CD4-positive, alpha-beta T cell (primary cell): ENCODE measurements at regions of chr14 and their contacts with region 1.

Region 1: GRCh38 chr14:89954070-89955028 is at the start of gene EFCAB11:
- DNase-seq: peak; percentile 88 to 99 (median 92)
- ATAC-seq: peak; percentile 81
- H3K4me3 ChIP-seq: peak within 1 kb of the TSS; percentile 74
- H3K4me3 Mint-ChIP-seq: peak within 1 kb of the TSS; percentile 88
- H3K27ac ChIP-seq: peak within 1 kb of the TSS in 1 of 2 donors; percentile 40
- H3K27ac Mint-ChIP-seq: peak within 1 kb of the TSS; percentile 99
- H3K4me1 ChIP-seq: peaks cover 38% of the 10 kb centered on the region
- H3K4me1 Mint-ChIP-seq: peaks cover 39% of the 10 kb centered on the region
- H3K27me3 ChIP-seq: no peaks in the 10 kb centered on the region
- H3K27me3 Mint-ChIP-seq: no peaks in the 10 kb centered on the region
- CTCF ChIP-seq: no peak
- total RNA-seq, gene EFCAB11: 0.36 to 0.47 TPM

Region 2: GRCh38 chr14:88824314-88825077 is 1129.9 kb before region 1 on chr14 and contains the start of gene TTC8:
- CTCF ChIA-PET with region 1: no interaction called
- POLR2A ChIA-PET with region 1: no interaction called
- intact Hi-C with region 1: loop called in 1 of 2 experiments (anchors 10 kb)
- DNase-seq: peak; percentile 75 to 92 (median 82)
- ATAC-seq: peak; percentile 96
- H3K4me3 ChIP-seq: peak within 1 kb of the TSS; percentile 83
- H3K4me3 Mint-ChIP-seq: peak within 1 kb of the TSS; percentile 86
- H3K27ac ChIP-seq: peak within 1 kb of the TSS; percentile 56 to 90
- H3K27ac Mint-ChIP-seq: peak within 1 kb of the TSS; percentile 96
- H3K4me1 ChIP-seq: peaks cover 7% of the 10 kb centered on the region
- H3K4me1 Mint-ChIP-seq: peaks cover 7% of the 10 kb centered on the region
- H3K27me3 ChIP-seq: no peaks in the 10 kb centered on the region
- H3K27me3 Mint-ChIP-seq: peaks cover 11% of the 10 kb centered on the region
- CTCF ChIP-seq: no peak
- total RNA-seq, gene TTC8: 1.6 to 2.1 TPM

Region 3: GRCh38 chr14:89625244-89625713 is 329.1 kb before region 1 on chr14:
- CTCF ChIA-PET with region 1: no interaction called
- POLR2A ChIA-PET with region 1: interaction called, 3 read pairs
- intact Hi-C with region 1: loop called (anchors 1 to 10 kb)
- DNase-seq: no peak
- ATAC-seq: no peak
- H3K4me3 ChIP-seq: no peak overlapping the region
- H3K4me3 Mint-ChIP-seq: no peak overlapping the region
- H3K27ac ChIP-seq: no peak overlapping the region
- H3K27ac Mint-ChIP-seq: no peak overlapping the region
- H3K4me1 ChIP-seq: peaks cover 35% of the 10 kb centered on the region
- H3K4me1 Mint-ChIP-seq: peaks cover 49% of the 10 kb centered on the region
- H3K27me3 ChIP-seq: no peaks in the 10 kb centered on the region
- H3K27me3 Mint-ChIP-seq: no peaks in the 10 kb centered on the region
- CTCF ChIP-seq: no peak

Region 4: DNA sequence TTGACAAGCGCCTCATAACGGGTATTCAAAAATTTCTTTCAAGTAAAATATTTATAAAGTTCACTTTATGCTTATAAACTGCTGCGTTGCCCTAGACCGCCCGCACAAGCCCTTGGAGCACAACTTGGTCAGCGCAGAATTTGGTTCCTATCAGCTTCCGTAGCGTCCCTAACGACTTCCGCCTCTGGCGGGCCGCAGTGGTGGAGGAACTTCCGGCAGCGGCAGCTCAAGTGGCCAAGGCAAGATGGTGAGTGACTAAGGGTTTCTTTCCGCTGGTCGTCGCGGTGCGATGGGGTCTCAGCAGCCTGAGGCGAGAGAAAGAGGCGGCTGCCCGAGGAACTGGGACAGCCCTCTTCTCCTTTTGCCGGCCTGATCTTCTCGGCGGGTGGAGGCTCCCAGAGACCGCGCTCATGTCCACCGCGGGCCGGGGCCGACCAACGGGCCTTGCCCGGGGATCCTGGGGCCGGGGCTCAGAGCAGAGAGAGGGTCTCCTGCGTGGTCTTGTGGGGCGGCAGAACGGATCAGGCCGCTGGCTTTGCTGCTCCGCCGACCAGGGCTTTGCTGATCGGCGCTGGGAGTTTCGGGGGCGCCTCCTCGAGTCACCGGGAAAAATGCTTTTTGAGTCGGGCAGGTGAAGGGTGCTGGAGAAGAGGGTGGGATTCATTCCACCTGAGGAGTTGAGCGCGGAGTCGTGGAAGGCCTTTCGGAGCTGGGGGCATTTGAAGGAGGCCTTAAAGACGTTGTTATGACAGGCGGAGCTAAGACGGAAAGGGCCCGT is 302.2 kb after region 1 on chr14 and contains the start of gene PSMC1:
- CTCF ChIA-PET with region 1: no interaction called
- POLR2A ChIA-PET with region 1: interaction called, 6 read pairs
- intact Hi-C with region 1: loop called (anchors 2 to 5 kb)
- DNase-seq: peak; percentile 79 to 93 (median 83)
- ATAC-seq: peak; percentile 94
- H3K4me3 ChIP-seq: peak within 1 kb of the TSS; percentile 79
- H3K4me3 Mint-ChIP-seq: peak within 1 kb of the TSS; percentile 99
- H3K27ac ChIP-seq: peak within 1 kb of the TSS; percentile 39 to 79
- H3K27ac Mint-ChIP-seq: peak within 1 kb of the TSS; percentile 91
- H3K4me1 ChIP-seq: peaks cover 12% of the 10 kb centered on the region
- H3K4me1 Mint-ChIP-seq: peaks cover 34% of the 10 kb centered on the region
- H3K27me3 ChIP-seq: peaks cover 0 to 4% of the 10 kb centered on the region in 2 experiments
- H3K27me3 Mint-ChIP-seq: peaks cover 16% of the 10 kb centered on the region
- CTCF ChIP-seq: no peak
- total RNA-seq, gene PSMC1: 75.8 to 80.3 TPM

Region 5: DNA sequence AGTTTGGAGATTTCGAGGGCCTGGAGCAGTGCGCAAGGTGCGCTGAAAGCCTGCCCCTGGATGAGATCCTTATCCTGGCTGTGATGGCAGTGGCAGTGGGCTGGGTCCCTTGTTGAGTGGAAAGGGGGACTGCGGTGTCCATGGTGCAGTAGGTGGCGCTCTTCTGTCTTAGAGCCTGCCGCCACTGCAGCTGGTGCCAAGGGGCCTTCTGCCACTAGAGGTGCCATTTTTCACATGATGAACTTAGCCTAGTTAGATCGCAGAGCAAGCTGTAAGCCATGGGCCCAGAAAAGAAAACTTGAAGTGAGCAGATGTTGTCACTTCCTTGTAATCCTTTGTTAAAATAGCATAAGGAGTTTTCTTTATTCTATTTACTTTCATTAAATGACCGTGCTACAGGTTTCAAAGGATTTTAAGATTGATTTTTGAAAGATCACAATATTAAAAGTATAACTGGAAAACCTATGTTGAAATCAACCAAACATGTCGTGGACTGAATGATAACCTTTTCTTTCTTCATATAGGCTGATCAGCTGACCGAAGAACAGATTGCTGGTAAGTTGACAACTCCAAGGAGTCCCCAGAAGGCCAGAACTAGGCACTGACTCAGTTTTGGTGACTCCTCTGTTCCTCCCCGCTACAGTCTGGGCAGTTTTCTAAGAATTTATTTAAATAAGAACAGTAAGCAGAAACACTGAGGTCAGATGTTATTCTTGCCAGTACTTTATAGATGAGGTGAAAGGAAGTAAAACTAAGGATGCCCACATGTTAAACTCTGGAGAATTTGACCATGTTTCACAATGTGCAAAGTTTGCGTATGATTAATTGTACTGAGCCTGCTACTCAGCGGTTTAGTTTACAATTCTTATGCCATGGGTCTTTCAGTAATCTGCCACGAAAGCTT is 445.4 kb after region 1 on chr14:
- CTCF ChIA-PET with region 1: interaction called, 3 read pairs
- POLR2A ChIA-PET with region 1: interaction called, 4 read pairs
- intact Hi-C with region 1: loop called in 1 of 2 experiments (anchors 5 kb)
- DNase-seq: peak; percentile 72 to 94 (median 80)
- ATAC-seq: peak; percentile 48
- H3K4me3 ChIP-seq: peak overlapping the region; percentile 62
- H3K4me3 Mint-ChIP-seq: peak overlapping the region; percentile 100
- H3K27ac ChIP-seq: peak overlapping the region; percentile 86 to 88
- H3K27ac Mint-ChIP-seq: peak overlapping the region; percentile 100
- H3K4me1 ChIP-seq: peaks cover 52% of the 10 kb centered on the region
- H3K4me1 Mint-ChIP-seq: peaks cover 73% of the 10 kb centered on the region
- H3K27me3 ChIP-seq: no peaks in the 10 kb centered on the region
- H3K27me3 Mint-ChIP-seq: peaks cover 9% of the 10 kb centered on the region
- CTCF ChIP-seq: peak; percentile 100